Activated CD4-positive, alpha-beta memory T cell treated with anti-CD3 and anti-CD28 coated beads, Interleukin-2, amount 10 ng/mL, durations not matched to agents 7 days and 5 days (primary cell): ENCODE measurements at regions of chr15 and their contacts with region 1.

Region 1: DNA sequence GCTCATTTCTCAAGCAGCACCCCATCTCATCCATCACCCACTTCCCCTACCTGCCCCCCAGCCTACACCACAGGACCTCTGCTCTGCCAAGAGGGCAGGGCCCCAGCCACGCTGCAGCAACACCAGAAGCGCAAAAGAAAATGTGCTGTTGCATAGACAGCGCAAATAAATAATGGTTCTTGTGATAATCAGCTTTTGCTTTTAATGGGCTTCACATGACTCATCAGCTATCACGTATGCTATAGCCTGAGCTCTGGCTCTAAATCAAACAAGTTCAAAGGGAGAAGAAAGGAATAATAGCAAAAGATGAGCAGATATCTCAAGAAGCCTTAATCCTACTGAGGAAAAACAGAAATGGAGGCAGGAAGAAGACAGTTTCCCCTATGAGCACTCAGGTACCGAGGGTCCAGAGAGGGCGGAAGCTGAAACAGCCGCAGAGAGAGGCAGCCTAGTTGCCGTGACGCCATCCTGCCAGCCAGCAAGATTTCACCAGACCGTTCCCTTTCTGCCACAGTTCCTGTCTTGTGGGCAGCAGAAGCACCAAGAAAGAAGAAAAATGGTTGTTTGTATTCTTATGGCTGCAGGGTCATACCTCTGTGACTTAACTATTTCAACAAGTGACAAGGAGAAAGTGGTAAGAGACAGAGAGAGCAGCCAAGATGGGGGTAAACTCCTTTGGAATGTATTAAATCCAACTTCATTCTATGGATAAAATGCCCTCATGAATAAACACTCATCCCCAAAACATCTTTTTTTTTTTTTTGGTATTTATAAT is 22.0 kb downstream of the RAB27A start:
- DNase-seq: peak; percentile 82
- H3K4me3 Mint-ChIP-seq: peak overlapping the region; percentile 60
- H3K27ac Mint-ChIP-seq: peak overlapping the region; percentile 95
- H3K4me1 Mint-ChIP-seq: peaks cover 77% of the 10 kb centered on the region
- H3K27me3 Mint-ChIP-seq: no peaks in the 10 kb centered on the region

Region 2: DNA sequence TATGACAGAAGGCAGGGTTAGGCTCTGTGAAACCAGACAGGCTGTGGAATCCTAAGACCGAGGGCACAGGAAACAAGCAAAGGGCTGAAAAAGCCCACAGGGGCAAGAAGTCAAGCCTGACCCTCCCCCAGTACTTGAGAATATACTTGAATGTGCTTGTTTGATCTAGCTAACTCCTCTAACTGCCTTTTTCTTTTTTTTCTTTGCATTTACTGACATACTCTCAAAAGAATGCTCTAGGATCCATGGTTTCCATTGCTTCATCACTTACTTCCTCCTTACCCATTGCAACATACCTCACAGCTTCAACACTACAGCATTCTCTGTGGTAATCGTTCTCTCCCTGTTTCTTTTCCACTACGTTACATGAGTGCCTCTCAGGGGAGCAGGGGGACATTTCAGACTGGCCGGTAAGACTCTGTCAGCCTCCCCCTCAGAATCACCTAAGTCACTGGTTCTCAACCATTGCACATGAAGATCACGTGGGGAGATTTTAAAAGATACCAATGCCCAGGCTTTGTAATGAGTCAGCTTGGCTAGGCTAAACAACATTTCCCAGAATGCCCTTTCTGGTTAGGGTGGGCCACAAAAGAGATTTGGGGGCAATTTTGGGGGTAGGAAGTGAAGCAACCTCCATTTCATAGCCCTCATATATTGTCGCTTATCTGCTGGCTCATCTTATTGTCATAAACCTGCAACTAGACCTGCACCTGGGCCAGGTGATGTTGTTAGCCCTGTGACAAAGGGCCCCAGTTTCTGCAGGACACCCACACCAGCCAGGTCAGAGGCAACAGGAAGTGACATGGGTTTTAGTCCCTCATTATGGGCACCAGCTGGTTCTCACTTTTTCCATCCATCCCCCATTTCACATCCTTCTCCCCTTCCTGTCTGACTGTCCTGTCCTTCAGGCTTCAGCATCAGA is 46.2 kb before region 1 on chr15:
- CTCF ChIA-PET with region 1: interaction called, 13 read pairs
- POLR2A ChIA-PET with region 1: interaction called, 11 read pairs
- DNase-seq: peak; percentile 46
- H3K4me3 Mint-ChIP-seq: peak overlapping the region; percentile 43
- H3K27ac Mint-ChIP-seq: peak overlapping the region; percentile 94
- H3K4me1 Mint-ChIP-seq: peaks cover 84% of the 10 kb centered on the region
- H3K27me3 Mint-ChIP-seq: no peaks in the 10 kb centered on the region

Region 3: GRCh38 chr15:55250392-55250791 is 17.2 kb before region 1 on chr15:
- CTCF ChIA-PET with region 1: interaction called, 6 read pairs
- POLR2A ChIA-PET with region 1: interaction called, 27 read pairs
- DNase-seq: no peak
- H3K4me3 Mint-ChIP-seq: no peak overlapping the region
- H3K27ac Mint-ChIP-seq: peak overlapping the region; percentile 73
- H3K4me1 Mint-ChIP-seq: peaks cover 74% of the 10 kb centered on the region
- H3K27me3 Mint-ChIP-seq: no peaks in the 10 kb centered on the region

Region 4: GRCh38 chr15:55255714-55256113 is 11.9 kb before region 1 on chr15:
- CTCF ChIA-PET with region 1: interaction called, 6 read pairs
- POLR2A ChIA-PET with region 1: interaction called, 27 read pairs
- DNase-seq: no peak
- H3K4me3 Mint-ChIP-seq: peak overlapping the region; percentile 76
- H3K27ac Mint-ChIP-seq: peak overlapping the region; percentile 82
- H3K4me1 Mint-ChIP-seq: peaks cover 71% of the 10 kb centered on the region
- H3K27me3 Mint-ChIP-seq: no peaks in the 10 kb centered on the region

Region 5: GRCh38 chr15:55279746-55280351 is 12.3 kb after region 1 on chr15:
- CTCF ChIA-PET with region 1: interaction called, 13 read pairs
- POLR2A ChIA-PET with region 1: interaction called, 44 read pairs
- DNase-seq: peak; percentile 68
- H3K4me3 Mint-ChIP-seq: peak overlapping the region; percentile 63
- H3K27ac Mint-ChIP-seq: peak overlapping the region; percentile 91
- H3K4me1 Mint-ChIP-seq: peaks cover 97% of the 10 kb centered on the region
- H3K27me3 Mint-ChIP-seq: no peaks in the 10 kb centered on the region

Region 6: GRCh38 chr15:55290528-55291057 is 23.0 kb after region 1 on chr15:
- CTCF ChIA-PET with region 1: interaction called, 4 read pairs
- POLR2A ChIA-PET with region 1: interaction called, 13 read pairs
- DNase-seq: peak; percentile 86
- H3K4me3 Mint-ChIP-seq: peak overlapping the region; percentile 94
- H3K27ac Mint-ChIP-seq: peak overlapping the region; percentile 86
- H3K4me1 Mint-ChIP-seq: peaks cover 37% of the 10 kb centered on the region
- H3K27me3 Mint-ChIP-seq: no peaks in the 10 kb centered on the region

Region 7: GRCh38 chr15:55372701-55373440 is 105.3 kb after region 1 on chr15:
- CTCF ChIA-PET with region 1: no interaction called
- POLR2A ChIA-PET with region 1: no interaction called
- DNase-seq: no peak
- H3K4me3 Mint-ChIP-seq: no peak overlapping the region
- H3K27ac Mint-ChIP-seq: peak overlapping the region; percentile 9
- H3K4me1 Mint-ChIP-seq: peaks cover 10% of the 10 kb centered on the region
- H3K27me3 Mint-ChIP-seq: no peaks in the 10 kb centered on the region